Activated T-helper 2 cell treated with anti-CD3 and anti-CD28 coated beads, Interferon-gamma antibody, Interleukin-2, Interleukin-4, amounts not matched to agents 10 μg/mL and 5 μg/mL and 100 μg/mL, durations not matched to agents 14 hours and 24 hours and 36 hours (primary cell): ENCODE measurements at regions of chr6 and their contacts with region 1.

Region 1: DNA sequence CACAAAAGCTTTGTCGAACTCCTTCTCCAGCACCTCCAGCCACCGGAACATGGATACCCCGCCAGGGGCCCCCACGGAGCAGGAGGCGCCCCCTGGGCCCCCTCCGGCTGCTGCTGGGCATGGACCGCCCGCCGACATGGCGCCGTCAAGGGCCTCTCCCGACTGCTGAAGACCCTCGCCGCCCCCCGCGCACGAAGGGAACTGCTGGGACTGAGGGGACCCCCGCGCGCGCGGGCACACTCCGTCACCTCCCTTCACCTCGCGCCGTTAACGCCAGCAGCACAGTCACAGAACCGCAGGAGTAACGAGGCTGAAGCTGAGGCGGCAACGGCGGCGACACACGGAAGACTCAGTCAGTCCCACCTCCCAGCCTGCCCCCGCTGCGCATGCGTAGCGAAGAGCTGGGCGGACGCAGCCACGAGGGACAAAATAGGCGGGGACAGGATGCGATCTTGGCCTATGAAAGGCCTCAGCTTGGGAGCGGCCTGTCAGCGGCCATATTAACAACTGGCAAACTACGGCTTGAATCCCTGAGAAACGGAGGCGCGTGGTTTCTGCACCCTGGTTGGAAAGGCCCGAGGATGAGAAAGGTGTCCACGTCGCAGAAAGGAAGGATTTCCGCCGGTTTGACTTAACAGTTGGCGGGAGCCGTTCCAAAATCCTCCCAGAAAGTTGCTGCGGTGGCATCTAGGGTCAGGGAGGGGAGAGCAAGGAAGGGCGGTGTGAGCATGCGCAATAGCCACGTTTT is at the start of gene GOPC:
- DNase-seq: peak; percentile 95
- H3K4me3 Mint-ChIP-seq: peak within 1 kb of the TSS; percentile 97
- H3K27ac Mint-ChIP-seq: peak within 1 kb of the TSS; percentile 99
- H3K4me1 Mint-ChIP-seq: peaks cover 32% of the 10 kb centered on the region
- H3K27me3 Mint-ChIP-seq: no peaks in the 10 kb centered on the region
- total RNA-seq, gene GOPC: 22.9 and 24.2 TPM in 2 replicates

Region 2: GRCh38 chr6:117449549-117450439 is 152.5 kb before region 1 on chr6:
- intact Hi-C with region 1: loop called (anchors 1 kb)
- DNase-seq: peak; percentile 27
- H3K4me3 Mint-ChIP-seq: no peak overlapping the region
- H3K27ac Mint-ChIP-seq: no peak overlapping the region
- H3K4me1 Mint-ChIP-seq: peaks cover 1% of the 10 kb centered on the region
- H3K27me3 Mint-ChIP-seq: peaks cover 48% of the 10 kb centered on the region

Region 3: DNA sequence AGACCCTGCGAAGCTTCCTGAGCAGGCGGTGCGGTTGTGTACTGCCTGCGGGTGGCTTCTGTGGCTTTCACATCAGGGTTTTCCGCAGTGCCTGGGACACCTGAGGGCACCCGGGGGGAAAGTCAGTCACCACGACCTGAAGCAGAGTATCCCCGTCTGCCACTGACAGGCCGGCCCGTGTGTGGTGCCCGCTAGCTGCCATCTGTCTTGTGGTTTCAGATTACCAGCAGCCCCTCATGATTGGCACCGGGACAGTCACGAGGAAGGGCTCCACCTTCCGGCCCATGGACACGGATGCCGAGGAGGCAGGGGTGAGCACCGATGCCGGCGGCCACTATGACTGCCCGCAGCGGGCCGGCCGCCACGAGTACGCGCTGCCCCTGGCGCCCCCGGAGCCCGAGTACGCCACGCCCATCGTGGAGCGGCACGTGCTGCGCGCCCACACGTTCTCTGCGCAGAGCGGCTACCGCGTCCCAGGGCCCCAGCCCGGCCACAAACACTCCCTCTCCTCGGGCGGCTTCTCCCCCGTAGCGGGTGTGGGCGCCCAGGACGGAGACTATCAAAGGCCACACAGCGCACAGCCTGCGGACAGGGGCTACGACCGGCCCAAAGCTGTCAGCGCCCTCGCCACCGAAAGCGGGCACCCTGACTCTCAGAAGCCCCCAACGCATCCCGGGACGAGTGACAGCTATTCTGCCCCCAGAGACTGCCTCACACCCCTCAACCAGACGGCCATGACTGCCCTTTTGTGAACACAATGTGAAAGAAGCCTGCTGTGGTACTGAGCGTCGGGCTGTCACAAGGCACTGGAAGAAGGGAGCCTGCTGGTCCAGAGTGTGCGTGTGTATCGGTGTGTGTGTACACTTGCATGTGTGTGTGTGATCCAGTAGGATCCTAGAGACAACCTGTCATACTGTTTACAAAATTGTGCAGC is 54.4 kb before region 1 on chr6:
- intact Hi-C with region 1: loop called (anchors 1 kb)
- DNase-seq: peak; percentile 16
- H3K4me3 Mint-ChIP-seq: peak overlapping the region; percentile 68
- H3K27ac Mint-ChIP-seq: peak overlapping the region; percentile 64
- H3K4me1 Mint-ChIP-seq: peaks cover 41% of the 10 kb centered on the region
- H3K27me3 Mint-ChIP-seq: peaks cover 6% of the 10 kb centered on the region

Region 4: DNA sequence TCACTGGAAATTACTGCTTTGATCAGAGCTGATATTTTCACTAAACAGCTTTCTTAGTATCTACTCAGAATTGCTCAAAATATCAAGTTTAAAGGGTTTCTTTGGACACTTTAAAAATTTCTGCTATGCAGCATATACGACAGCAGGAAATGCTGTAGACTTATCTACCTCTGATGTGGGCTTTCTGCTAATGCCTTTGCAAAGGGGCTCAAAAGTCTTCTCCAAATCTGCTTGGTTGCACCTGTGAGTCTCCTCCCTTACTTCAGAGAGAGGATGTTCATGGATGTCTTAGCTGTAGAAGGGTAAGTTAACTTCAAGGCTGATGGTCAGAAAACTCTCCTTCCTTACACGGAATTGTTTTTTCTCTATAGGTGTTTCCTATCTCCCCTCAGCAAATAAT is 53.1 kb after region 1 on chr6:
- intact Hi-C with region 1: no loop called
- DNase-seq: no peak
- H3K4me3 Mint-ChIP-seq: no peak overlapping the region
- H3K27ac Mint-ChIP-seq: no peak overlapping the region
- H3K4me1 Mint-ChIP-seq: no peaks in the 10 kb centered on the region
- H3K27me3 Mint-ChIP-seq: no peaks in the 10 kb centered on the region

Region 5: GRCh38 chr6:117674991-117675657 is 72.8 kb after region 1 on chr6 and contains the start of gene NUS1:
- intact Hi-C with region 1: loop called (anchors 1 kb)
- DNase-seq: peak; percentile 96
- H3K4me3 Mint-ChIP-seq: peak within 1 kb of the TSS; percentile 89
- H3K27ac Mint-ChIP-seq: peak within 1 kb of the TSS; percentile 91
- H3K4me1 Mint-ChIP-seq: peaks cover 35% of the 10 kb centered on the region
- H3K27me3 Mint-ChIP-seq: no peaks in the 10 kb centered on the region
- total RNA-seq, gene NUS1: 44.2 and 44.6 TPM in 2 replicates